ENCODE measurements at regions of chr1 and their contacts with region 1.

Region 1: DNA sequence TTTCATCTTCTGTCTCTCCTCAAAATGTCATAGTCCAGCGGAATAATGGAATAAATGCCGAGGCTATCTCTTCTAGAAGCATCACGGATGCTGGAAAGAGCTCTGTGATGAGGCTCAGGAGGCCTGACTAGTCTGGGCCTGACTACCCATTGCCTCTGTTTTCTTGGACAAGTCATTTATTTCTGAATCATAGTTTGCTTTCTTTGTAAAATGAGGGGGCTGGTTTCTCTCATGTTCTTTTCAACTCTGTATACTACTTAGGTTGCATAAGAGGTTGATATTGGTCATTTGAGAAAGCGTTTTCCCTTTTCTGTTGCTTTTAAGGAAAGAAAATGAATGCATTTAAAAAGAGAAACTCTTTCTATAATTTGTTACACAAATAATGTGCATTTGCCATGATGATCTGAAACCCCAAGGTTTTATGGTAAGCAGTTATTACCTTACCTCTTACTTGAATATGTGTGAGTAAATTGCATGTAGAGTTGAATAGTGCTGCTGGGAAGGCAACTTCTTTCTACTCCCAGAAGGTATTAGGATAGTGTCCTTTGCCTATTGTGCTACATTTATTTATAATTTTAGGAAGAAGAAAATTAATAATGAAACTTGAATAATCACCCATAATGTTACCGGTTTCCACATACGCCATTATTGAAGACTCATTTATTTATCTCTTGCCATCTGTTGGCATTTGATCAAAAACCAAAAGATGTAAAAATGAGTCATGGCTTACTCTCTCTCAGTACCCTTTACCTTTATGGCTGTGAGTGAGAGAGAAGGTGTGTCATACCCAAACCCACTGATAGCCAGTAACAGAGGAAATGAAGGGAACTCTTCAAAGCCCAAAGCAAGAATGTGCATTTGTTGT is 179.1 kb downstream of the FASLG start:
- DNase-seq: peak; percentile 79
- H3K4me3 Mint-ChIP-seq: no peak overlapping the region
- H3K27ac Mint-ChIP-seq: peak overlapping the region; percentile 38
- H3K4me1 Mint-ChIP-seq: peaks cover 28% of the 10 kb centered on the region
- H3K27me3 Mint-ChIP-seq: peaks cover 54% of the 10 kb centered on the region

Region 2: DNA sequence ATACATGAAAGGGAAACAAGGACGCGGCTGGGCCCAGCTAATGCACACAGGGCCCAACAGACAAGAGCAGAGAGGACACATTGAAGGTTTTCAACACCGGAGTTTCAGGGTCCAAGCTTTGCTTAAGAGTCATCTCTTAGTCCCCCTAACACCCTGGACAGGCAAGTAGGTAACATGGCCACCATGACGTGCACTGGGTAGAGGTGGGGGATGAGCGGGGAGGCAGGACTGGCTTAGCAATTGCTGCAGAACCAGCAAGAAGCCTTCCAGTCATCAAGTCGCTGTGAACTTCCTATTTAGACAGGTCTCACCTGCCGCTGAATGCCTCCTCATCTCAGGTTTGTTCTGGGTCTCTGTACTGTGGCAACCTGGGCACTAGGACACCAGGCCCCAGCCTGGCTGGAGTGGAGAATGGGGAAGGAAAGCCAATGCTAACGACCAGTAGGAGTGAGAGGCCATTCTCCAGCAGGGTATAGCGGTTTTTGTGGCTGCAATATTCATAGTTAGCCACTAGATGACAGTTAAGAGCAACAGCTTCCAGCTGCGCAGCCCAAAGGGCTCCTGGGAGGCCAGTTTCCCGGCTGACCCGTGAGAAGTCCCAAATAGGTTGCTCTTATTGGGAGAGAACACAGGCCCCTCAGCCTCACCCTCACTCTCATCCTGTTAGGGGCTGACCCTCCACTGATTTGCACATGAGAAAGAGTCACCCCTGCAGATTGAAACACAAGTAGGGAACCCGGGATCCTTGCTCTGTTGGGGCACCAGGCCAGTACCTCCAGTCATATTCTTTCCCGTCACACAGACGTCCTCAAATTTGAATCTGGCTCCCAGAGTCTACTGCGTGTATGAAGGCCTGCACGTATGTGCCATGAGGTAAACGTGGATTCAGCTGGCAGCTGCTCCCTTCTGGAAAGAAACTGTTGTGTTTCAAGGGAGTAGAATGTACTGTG is 388.2 kb before region 1 on chr1:
- intact Hi-C with region 1: loop called (anchors 5 kb)
- DNase-seq: peak; percentile 83
- H3K4me3 Mint-ChIP-seq: peak overlapping the region; percentile 39
- H3K27ac Mint-ChIP-seq: peak overlapping the region; percentile 65
- H3K4me1 Mint-ChIP-seq: peaks cover 27% of the 10 kb centered on the region
- H3K27me3 Mint-ChIP-seq: peaks cover 1% of the 10 kb centered on the region

Region 3: GRCh38 chr1:172671591-172671990 is 166.5 kb before region 1 on chr1:
- intact Hi-C with region 1: loop called (anchors 10 kb)
- DNase-seq: no peak
- H3K4me3 Mint-ChIP-seq: peak overlapping the region; percentile 24
- H3K27ac Mint-ChIP-seq: no peak overlapping the region
- H3K4me1 Mint-ChIP-seq: peaks cover 79% of the 10 kb centered on the region
- H3K27me3 Mint-ChIP-seq: no peaks in the 10 kb centered on the region

Region 4: GRCh38 chr1:172870901-172871606 is 33.0 kb after region 1 on chr1:
- intact Hi-C with region 1: no loop called
- DNase-seq: peak; percentile 67
- H3K4me3 Mint-ChIP-seq: no peak overlapping the region
- H3K27ac Mint-ChIP-seq: no peak overlapping the region
- H3K4me1 Mint-ChIP-seq: peaks cover 33% of the 10 kb centered on the region
- H3K27me3 Mint-ChIP-seq: peaks cover 39% of the 10 kb centered on the region

Region 5: DNA sequence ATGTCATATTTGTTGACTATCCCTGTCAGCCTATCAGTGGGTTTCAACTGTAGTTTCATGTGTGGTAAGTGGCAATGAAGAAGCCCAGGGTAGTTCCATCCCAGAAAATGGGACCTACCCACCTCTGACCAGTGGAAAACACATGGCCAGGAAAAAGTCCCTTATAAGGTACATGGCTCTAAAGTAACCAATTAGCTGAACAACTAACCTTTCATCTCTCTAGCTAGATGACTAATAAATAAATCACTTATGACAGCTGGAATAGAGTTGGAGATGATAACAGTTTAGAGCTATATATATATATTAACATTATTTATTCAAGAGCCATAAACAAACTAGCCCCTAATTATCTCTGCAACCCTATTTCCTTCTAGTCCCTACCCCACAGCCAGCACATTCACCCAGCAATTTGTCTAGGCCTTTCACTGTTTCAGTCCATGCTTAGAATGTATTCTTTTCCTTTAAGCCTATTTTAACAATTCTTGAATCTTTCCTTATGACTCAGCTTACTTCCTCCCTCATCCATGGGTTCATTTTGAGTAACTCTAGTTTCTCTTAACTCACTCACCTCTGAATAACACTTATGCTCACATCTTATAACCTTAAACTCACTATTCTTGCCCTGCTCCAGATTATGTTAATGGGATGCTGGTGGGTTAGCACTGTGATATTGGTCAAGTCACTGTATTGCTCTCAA is 128.9 kb after region 1 on chr1:
- intact Hi-C with region 1: loop called (anchors 2 kb)
- DNase-seq: no peak
- H3K4me3 Mint-ChIP-seq: no peak overlapping the region
- H3K27ac Mint-ChIP-seq: no peak overlapping the region
- H3K4me1 Mint-ChIP-seq: peaks cover 8% of the 10 kb centered on the region
- H3K27me3 Mint-ChIP-seq: peaks cover 28% of the 10 kb centered on the region

Region 6: DNA sequence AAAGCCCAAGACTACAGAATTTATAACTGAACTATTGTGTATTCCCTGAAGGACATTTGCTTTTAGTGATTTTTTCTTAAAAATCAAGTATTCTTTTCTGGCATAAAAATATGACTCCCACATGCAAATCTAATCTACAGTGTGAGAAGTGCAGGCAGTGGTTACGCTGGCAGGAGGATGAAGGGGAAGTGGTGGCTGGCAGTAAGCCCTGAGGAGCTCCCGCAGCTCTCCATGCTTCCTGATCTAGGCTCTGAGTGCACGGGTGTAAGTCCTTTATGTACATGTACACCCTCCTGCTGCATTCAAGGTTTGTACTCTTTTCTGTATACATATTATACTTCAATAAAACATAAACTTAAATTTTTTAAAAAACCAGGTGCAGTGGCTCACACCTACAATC is 571.6 kb after region 1 on chr1:
- intact Hi-C with region 1: loop called (anchors 10 kb)
- DNase-seq: no peak
- H3K4me3 Mint-ChIP-seq: no peak overlapping the region
- H3K27ac Mint-ChIP-seq: no peak overlapping the region
- H3K4me1 Mint-ChIP-seq: peaks cover 13% of the 10 kb centered on the region
- H3K27me3 Mint-ChIP-seq: no peaks in the 10 kb centered on the region